ENCODE measurements at regions of chr11 and their contacts with region 1.

Region 1: GRCh38 chr11:19892387-19892786 is 179.8 kb downstream of the NAV2 start:
- DNase-seq: peak; percentile 7
- ATAC-seq: no peak
- H3K4me3 Mint-ChIP-seq: no peak overlapping the region
- H3K27ac Mint-ChIP-seq: no peak overlapping the region
- H3K4me1 Mint-ChIP-seq: no peaks in the 10 kb centered on the region
- H3K27me3 Mint-ChIP-seq: peaks cover 3% of the 10 kb centered on the region

Region 2: GRCh38 chr11:19880088-19880345 is 12.4 kb before region 1 on chr11:
- CTCF ChIA-PET with region 1: no interaction called
- POLR2A ChIA-PET with region 1: interaction called, 10 read pairs
- intact Hi-C with region 1: no loop called
- DNase-seq: no peak
- ATAC-seq: no peak
- H3K4me3 Mint-ChIP-seq: no peak overlapping the region
- H3K27ac Mint-ChIP-seq: no peak overlapping the region
- H3K4me1 Mint-ChIP-seq: no peaks in the 10 kb centered on the region
- H3K27me3 Mint-ChIP-seq: peaks cover 4% of the 10 kb centered on the region